Mammary epithelial cell (primary cell): ENCODE measurements at regions of chr10 and their contacts with region 1.

Region 1: DNA sequence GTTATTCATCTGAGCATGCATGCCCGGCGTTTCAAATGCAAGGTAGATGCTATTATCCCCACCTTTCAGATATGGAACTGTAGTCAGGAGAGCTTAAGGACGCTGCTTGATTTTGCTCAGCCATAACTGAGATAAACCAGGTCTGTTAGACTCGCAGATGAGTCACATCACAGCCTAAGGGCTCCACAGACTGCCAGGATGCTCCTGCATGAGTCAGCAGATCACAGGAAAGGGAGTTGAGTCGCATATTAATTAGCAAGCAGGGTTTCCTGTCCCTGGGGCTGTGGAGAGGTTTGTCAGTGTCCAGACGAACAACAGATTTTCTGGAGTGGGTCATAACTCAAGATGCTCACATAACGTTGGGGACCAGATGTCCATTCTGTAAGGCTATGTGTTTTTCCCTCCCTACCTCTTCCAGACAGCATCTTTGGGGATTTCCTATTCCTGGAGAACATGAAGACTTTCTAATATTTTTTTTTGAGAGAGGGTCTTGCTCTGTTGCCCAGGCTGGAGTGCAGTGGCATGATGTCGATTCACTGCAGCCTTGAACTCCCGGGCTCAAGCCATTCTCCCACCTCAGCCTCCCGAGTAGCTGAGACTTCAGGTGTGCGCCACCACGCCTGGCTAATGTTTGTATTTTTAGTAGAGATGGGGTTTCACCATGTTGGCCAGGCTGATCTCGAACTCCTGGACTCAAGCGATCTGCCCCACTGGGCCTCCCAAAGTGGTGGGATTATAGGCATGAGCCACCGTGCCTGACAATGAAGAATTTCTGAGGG is 36.7 kb downstream of the PFKFB3 start:
- DNase-seq: peak; percentile 98
- H3K4me3 ChIP-seq: no peak overlapping the region
- H3K27ac ChIP-seq: peak overlapping the region; percentile 24
- H3K4me1 ChIP-seq: peaks cover 20% of the 10 kb centered on the region
- H3K27me3 ChIP-seq: no peaks in the 10 kb centered on the region
- CTCF ChIP-seq: no peak

Region 2: DNA sequence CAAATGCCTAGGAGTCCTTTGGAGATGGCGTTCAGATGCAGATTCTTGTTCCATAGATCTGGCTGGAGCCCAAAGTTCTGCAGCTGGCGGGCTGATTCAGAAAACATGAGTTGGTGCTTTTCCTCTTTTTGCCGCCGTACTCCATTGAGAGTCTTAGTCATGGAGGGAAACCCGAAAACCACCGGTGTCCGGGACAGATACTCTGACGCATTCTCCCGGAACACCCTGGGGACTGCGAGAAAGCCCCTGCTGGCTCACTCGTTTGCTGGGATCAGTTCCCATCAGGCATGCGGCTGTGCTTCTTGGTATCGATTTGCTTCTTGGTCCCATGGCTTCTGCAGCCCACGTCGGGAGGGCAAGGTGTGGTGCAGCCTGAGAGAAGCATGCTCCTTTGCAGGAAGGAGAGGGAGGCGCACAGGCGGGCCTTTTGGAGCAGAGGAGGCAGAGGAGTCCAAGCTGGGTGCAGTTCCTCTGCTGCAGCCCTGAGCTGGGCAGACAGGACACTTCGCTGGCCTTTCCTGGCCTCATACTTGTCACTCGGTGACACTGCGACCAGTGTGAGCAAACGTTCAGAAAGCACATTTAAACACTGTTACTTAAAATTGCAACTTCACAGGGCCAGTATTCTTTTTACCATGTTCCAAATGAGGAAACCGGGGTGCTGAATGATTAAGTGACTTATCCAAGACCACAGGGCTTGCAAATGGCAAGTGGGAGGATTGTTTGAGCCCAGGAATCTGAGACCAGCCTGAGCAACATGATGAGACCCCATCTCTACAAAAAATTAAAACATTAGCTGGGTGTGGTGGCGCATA is 67.3 kb before region 1 on chr10:
- CTCF ChIA-PET with region 1: no interaction called
- dilution Hi-C with region 1: no loop called
- in situ Hi-C with region 1: no loop called
- intact Hi-C with region 1: no loop called
- DNase-seq: no peak
- H3K4me3 ChIP-seq: no peak overlapping the region
- H3K27ac ChIP-seq: no peak overlapping the region
- H3K4me1 ChIP-seq: peaks cover 14% of the 10 kb centered on the region
- H3K27me3 ChIP-seq: no peaks in the 10 kb centered on the region
- CTCF ChIP-seq: no peak

Region 3: DNA sequence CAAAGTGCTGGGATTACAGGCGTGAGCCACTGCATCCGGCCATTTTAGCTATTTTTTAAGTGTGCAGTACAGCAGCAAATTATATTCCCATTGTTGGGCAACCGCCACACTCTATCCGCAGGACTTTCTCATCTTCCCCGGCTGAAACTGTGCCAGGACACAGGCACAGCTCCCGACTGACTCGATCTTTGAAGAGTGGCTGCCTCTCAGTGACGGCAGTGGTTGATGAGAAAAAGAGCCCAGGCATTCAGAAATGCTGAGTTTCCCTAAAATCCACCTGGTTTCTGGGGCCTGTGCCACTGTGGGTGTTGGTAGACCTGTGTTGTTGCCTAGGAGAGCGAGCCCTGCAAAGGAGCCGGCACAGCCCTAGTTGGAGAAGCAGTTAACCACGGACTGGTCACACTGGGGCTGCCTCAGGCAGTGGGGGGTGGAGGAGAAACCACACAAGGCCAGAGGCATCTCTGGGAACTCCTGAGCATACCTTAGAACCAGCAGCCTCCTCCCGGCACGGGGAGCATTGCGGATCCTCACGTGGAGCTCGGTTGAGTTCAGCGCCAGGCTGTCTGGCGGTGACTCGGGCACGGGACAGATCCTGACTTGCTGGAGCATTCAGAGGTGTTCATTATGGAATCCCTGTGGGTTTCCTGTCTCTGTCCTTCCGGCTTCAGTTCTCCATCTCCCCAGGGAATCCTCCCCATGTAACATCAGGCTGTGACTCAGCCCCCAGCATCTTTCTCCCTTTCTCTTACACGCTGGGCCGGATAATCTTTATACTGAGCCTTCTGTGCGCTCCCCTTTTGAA is 20.5 kb before region 1 on chr10:
- CTCF ChIA-PET with region 1: no interaction called
- dilution Hi-C with region 1: no loop called
- in situ Hi-C with region 1: no loop called
- intact Hi-C with region 1: loop called (anchors 1 kb)
- DNase-seq: peak; percentile 100
- H3K4me3 ChIP-seq: no peak overlapping the region
- H3K27ac ChIP-seq: peak overlapping the region; percentile 84
- H3K4me1 ChIP-seq: peaks cover 36% of the 10 kb centered on the region
- H3K27me3 ChIP-seq: no peaks in the 10 kb centered on the region
- CTCF ChIP-seq: no peak

Region 4: GRCh38 chr10:6227346-6227745 is 12.1 kb before region 1 on chr10:
- CTCF ChIA-PET with region 1: no interaction called
- dilution Hi-C with region 1: no loop called
- in situ Hi-C with region 1: no loop called
- intact Hi-C with region 1: loop called (anchors 1 kb)
- DNase-seq: no peak
- H3K4me3 ChIP-seq: no peak overlapping the region
- H3K27ac ChIP-seq: no peak overlapping the region
- H3K4me1 ChIP-seq: peaks cover 6% of the 10 kb centered on the region
- H3K27me3 ChIP-seq: no peaks in the 10 kb centered on the region
- CTCF ChIP-seq: no peak

Region 5: DNA sequence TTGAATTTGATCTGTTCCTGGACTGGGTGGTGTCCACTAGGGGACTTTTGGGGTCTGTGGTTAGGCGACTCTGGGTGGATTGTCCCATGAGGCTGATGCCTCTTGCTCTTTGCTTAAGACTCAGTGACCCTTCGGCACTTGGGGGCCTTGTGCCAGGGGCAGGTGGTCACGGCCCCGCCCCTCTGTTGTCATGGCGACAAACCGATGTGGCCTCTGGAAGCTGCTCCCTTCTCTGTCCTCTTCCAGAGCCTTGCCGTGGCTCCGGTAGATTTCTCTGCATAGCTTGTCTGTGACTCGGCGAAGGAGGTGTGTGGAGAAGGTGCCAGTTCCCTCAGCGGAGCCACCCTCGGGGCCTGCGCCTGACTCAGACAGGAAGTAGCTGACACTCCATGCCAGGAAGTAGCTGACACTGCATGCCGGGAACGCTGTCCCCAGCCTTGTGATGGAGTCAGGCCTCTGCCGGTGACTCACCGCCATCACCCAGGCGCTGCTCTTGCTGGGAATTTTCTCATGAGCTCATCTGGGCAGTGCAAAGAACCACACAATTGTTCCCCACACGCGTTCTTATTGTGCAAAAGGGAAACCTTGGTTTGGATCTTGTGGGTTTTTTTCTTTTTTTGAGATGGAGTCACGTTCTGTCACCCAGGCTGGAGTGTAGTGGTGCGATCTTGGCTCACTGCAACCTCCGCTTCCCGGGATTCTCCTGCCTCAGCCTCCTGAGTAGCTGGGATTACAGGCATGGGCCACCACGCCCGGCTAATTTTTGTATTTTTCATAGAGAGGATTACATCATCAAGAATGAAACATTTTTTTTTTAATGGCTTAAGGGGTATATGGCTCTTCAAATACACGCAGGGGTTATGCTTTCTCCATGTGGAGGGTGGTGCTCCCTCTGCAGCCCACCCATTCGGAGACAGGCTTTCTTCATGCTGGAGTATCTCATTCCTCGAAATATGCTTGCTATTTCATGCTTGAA is 35.9 kb after region 1 on chr10:
- CTCF ChIA-PET with region 1: no interaction called
- dilution Hi-C with region 1: no loop called
- in situ Hi-C with region 1: no loop called
- intact Hi-C with region 1: loop called (anchors 1 kb)
- DNase-seq: peak; percentile 99
- H3K4me3 ChIP-seq: peak overlapping the region in 1 of 3 experiments; percentile 34
- H3K27ac ChIP-seq: peak overlapping the region; percentile 84
- H3K4me1 ChIP-seq: peaks cover 27% of the 10 kb centered on the region
- H3K27me3 ChIP-seq: no peaks in the 10 kb centered on the region
- CTCF ChIP-seq: no peak